Right ventricle myocardium inferior (tissue), 1 donor: ENCODE measurements at regions of chr20 and their contacts with region 1.

Region 1: DNA sequence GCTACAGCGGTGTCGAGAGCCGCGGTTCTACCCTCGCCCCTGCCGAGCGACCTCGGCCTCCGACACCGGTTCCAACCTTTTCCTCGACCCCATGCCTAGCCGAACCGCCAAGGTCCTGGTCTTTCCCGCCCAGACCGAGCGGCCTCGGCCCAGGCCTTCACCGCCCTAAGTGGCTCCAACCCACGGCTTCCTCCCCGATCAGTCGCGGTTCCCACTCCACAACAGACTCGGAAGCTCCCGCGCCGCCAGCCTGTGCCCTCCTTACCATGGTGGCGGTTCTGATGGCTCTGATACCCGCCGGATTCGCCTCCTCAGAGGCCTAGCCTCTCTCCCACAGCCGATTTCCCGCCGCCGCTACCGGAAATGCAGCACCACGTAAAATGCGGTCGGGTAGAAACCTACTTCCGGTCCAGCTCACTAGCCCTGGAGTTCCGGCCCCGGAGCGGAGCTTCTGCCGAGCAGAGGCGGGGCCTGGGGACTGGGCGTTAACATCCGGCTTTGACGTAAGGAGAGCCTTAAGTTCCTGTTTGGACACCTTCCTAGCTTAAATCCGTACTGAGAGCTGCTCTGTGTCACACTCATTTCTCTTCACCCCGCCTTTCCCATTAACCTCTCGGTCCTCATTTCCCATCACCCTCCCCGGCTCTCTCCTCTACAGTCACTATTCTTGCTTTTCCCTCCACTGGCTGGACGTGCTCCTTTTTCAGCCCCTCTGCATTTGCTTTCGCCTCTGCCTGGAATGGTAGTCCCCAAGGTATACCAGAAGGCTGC is at the start of gene SNRPB:
- DNase-seq: peak; percentile 97
- ATAC-seq: peak; percentile 100
- total RNA-seq, gene SNRPB: 55.7 TPM

Region 2: GRCh38 chr20:2101865-2102584 is 368.6 kb before region 1 on chr20:
- intact Hi-C with region 1: loop called (anchors 10 kb)
- DNase-seq: peak; percentile 96
- ATAC-seq: peak; percentile 95

Region 3: DNA sequence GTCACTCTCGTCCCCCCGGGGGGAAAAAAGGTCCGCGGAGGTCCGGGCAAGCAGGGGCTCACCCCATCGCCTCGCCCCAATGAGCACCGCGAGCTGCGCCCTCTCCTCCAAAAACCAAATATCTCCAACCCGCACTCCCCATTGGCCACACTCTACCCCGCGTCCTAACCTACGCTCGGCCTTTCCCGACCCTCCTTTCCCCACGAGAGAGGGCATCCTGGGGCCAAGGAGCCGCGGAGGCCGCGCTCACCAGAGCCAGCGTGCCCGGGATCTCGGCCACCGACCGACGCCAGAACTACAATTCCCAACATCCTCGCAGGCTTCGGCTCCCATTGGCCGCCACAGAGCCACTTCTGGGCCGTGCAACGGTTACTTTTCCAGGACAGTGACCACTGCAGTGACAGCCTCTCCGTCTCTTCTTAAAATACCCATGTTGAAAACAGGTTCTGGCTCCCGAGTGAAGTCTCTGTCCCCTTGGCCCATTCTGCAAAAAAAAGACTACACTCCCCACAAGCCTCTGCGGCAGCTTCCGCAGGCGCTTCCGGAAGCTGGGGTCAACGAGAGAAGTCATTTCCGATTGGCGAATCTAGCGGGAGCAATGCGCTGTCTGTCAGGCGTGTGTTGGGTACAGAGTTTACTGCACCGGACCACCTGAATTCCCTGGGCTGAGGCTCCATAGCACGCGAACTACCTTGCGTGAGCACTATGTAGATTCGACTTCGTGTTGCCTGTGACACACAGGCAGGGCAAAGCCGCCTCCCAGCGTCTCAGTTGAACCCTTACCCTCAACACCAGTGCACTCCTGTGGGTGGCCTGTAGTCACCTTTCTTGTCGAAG is 38.2 kb after region 1 on chr20 and contains the start of gene ZNF343:
- intact Hi-C with region 1: loop called (anchors 2 kb)
- DNase-seq: peak; percentile 92
- ATAC-seq: peak; percentile 94
- total RNA-seq, gene ZNF343: 5.8 TPM

Region 4: GRCh38 chr20:2523919-2524708 is 53.5 kb after region 1 on chr20:
- intact Hi-C with region 1: loop called (anchors 2 kb)
- DNase-seq: peak; percentile 95
- ATAC-seq: peak; percentile 72

Region 5: DNA sequence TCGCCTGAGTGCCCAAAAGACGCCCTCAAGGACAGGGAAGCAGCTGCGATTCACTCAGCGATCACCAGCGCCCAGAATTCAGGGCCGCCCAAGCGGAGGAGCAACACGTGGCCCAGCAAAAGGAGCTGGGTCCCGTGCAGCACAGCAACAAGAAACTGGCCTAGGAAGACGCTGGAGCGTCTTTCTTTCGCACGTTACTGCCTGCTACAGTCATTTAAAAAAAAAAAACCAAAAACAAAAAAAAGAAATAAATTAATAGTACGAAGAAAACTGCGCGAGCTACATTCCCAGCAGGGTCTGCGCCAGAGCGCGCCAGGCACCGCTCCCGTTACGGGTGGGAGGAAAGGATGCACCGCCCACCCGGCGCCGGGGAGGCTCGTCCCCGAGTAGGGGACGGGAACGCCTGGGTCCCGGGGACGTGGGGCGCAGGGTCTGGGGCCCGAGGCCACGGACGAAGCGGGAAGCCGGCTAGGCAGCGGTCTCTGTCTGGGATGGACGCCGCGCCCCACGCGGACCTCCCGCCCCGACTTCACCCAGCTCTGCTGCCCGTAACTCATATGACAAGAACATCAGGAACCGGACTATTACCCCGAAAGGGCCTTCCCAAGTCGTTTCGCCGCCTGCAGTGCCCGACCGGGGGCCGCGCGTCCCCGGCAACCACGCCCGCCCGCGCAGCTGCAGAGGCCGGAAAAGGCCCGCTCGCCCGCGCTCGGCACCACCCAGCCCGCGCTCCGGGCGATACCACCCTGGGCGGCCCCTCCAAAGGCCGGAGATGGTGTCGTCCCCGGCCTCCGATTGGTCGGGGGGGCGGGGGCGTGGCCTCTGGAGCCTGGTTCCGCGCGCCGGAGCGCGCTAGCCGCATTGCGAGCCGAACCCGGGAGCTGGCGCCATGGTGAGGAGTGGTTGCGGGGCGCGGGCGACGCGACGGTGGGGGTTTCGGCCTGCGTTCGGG is 181.4 kb after region 1 on chr20 and contains the start of gene NOP56:
- intact Hi-C with region 1: loop called (anchors 1 kb)
- DNase-seq: peak; percentile 94
- ATAC-seq: peak; percentile 99
- total RNA-seq, gene NOP56: 46.7 TPM